ENCODE measurements at regions of chr2 and their contacts with region 1.

Region 1: DNA sequence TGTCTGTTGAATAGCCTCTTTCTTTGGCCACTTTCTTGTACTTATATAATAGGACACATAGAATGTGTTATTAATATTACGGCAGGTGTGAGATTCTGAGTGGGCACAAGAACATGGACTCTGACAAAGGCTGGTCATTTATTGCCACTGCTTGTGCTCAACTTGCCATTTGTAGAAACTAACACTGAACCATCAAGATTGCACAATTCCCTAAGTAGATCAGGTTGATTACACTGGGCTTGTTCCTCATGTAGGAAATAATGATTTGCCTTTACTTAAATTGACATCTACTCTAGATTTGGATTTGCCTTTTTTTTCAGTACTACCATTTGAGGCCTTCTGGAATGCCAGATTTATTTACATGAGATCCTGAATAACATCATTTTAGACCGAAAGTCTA is 342.7 kb upstream of the CWC22 start:
- DNase-seq: no peak
- ATAC-seq: no peak
- H3K4me3 ChIP-seq: no peak overlapping the region
- H3K27ac ChIP-seq: no peak overlapping the region
- H3K4me1 ChIP-seq: no peaks in the 10 kb centered on the region
- H3K27me3 ChIP-seq: no peaks in the 10 kb centered on the region
- CTCF ChIP-seq: no peak

Region 2: DNA sequence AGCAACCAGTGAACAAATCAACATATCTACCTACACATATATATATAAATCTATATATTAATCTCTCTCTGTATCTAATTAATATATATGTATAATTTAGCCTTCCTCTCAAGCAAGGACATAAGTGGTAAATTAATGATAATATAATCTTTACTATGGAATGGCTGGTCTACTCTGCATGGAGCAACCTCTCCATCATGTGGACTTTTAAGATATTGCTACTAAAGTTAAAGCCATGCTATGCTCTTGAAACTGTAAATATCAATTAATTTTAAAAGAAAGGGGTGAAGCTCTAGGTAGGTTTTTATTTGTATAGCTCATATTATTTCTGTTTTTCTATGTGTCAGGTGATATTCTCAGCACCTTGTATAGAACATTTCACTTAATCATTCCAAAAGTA is 1782.8 kb after region 1 on chr2:
- intact Hi-C with region 1: loop called in 1 of 10 experiments (anchors 5 kb)
- DNase-seq: no peak
- ATAC-seq: no peak
- H3K4me3 ChIP-seq: no peak overlapping the region
- H3K27ac ChIP-seq: no peak overlapping the region
- H3K4me1 ChIP-seq: peaks cover 0 to 5% (median 0%) of the 10 kb centered on the region in 9 donors
- H3K27me3 ChIP-seq: no peaks in the 10 kb centered on the region
- CTCF ChIP-seq: peak in 4 of 9 donors; percentile 10 to 25 (median 17)

Measured in heart right ventricle (tissue), 16 donors.